ENCODE measurements at regions of chr1 and their contacts with region 1.

Region 1: GRCh38 chr1:235946571-235946981 is 79.9 kb upstream of the LYST start:
- DNase-seq: peak in 1 of 7 donors; percentile 34
- H3K4me3 ChIP-seq: no peak overlapping the region
- H3K27ac ChIP-seq: peak overlapping the region in 1 of 5 donors; percentile 55
- H3K4me1 ChIP-seq: no peaks in the 10 kb centered on the region
- H3K27me3 ChIP-seq: no peaks in the 10 kb centered on the region
- CTCF ChIP-seq: peak in 4 of 6 experiments; percentile 12 to 33 (median 23)
- POLR2A ChIP-seq: no peak

Region 2: GRCh38 chr1:235878082-235878811 is 68.3 kb before region 1 on chr1:
- intact Hi-C with region 1: loop called in 1 of 2 experiments (anchors 10 kb)
- DNase-seq: peak in 3 of 7 donors; percentile 17 to 33 (median 30)
- H3K4me3 ChIP-seq: no peak overlapping the region
- H3K27ac ChIP-seq: no peak overlapping the region
- H3K4me1 ChIP-seq: peaks cover 5 to 15% of the 10 kb centered on the region in 2 donors
- H3K27me3 ChIP-seq: no peaks in the 10 kb centered on the region
- CTCF ChIP-seq: no peak
- POLR2A ChIP-seq: no peak

Region 3: GRCh38 chr1:235984041-235984825 is 37.7 kb after region 1 on chr1:
- intact Hi-C with region 1: no loop called
- DNase-seq: no peak
- H3K4me3 ChIP-seq: no peak overlapping the region
- H3K27ac ChIP-seq: peak overlapping the region in 3 of 5 donors; percentile 34 to 72 (median 63)
- H3K4me1 ChIP-seq: peaks cover 4 to 12% of the 10 kb centered on the region in 2 donors
- H3K27me3 ChIP-seq: no peaks in the 10 kb centered on the region
- CTCF ChIP-seq: no peak
- POLR2A ChIP-seq: no peak